ENCODE measurements at regions of chr1 and their contacts with region 1.

Region 1: DNA sequence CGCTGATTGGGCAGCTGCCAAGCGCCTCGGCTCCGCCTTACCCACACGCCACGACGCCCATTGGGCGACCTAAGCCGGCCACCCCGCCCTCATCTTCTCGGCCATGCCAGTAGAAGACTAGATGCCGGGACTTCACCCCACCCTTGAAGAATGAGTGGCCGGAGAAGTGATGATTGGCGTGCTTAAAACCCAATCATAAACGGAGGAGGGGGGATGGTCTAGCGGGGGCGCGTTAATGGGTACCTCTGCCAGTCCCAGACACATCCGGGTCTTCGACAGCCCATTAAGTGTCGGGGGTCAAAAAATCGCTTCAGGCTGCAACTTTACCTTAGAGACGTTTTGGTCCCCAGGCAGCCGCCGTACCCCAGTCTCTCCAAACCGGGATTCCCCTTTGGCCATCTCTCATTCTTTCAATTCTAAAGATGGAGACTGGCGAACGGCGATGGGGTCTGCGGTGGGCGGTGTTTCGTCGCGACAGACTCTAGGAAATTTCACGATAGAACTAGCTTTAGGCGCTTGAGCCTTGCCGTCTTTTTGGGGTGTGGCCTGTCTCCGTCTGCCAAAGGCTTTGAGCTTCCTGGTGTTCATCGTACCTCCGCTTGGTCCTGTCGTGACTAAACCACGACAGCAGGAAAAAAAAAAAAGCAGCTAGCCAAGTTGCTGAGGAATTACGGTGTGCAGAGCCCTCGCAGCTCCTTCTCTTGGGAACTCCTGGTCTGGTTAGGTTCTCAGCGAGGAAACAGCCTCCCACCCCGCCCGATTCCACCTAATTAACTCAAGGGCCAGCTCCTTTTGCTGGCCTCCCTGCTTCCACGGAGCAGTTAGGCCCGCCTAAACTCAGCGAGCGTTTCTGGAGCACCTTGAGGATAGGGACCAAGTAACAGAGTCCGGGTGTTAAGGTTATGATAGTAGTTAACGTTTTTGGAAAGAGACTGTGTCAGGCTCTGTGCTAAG is at the start of gene GATAD2B:
- DNase-seq: peak; percentile 100
- H3K4me3 Mint-ChIP-seq: peak within 1 kb of the TSS; percentile 74
- H3K27ac Mint-ChIP-seq: peak within 1 kb of the TSS; percentile 74
- H3K4me1 Mint-ChIP-seq: peaks cover 34% of the 10 kb centered on the region
- H3K27me3 Mint-ChIP-seq: no peaks in the 10 kb centered on the region
- CTCF ChIP-seq: no peak
- total RNA-seq, gene GATAD2B: 95.5 and 108 TPM in 2 replicates

Region 2: GRCh38 chr1:153478692-153479618 is 444.3 kb before region 1 on chr1:
- CTCF ChIA-PET with region 1: no interaction called
- POLR2A ChIA-PET with region 1: no interaction called
- intact Hi-C with region 1: no loop called
- DNase-seq: no peak
- H3K4me3 Mint-ChIP-seq: no peak overlapping the region
- H3K27ac Mint-ChIP-seq: no peak overlapping the region
- H3K4me1 Mint-ChIP-seq: peaks cover 11% of the 10 kb centered on the region
- H3K27me3 Mint-ChIP-seq: peaks cover 50% of the 10 kb centered on the region
- CTCF ChIP-seq: no peak

Region 3: GRCh38 chr1:153805042-153805745 is 118.1 kb before region 1 on chr1:
- CTCF ChIA-PET with region 1: interaction called, 9 read pairs
- POLR2A ChIA-PET with region 1: interaction called, 24 read pairs
- intact Hi-C with region 1: no loop called
- DNase-seq: peak; percentile 95
- H3K4me3 Mint-ChIP-seq: peak overlapping the region; percentile 60
- H3K27ac Mint-ChIP-seq: peak overlapping the region; percentile 99
- H3K4me1 Mint-ChIP-seq: peaks cover 32% of the 10 kb centered on the region
- H3K27me3 Mint-ChIP-seq: no peaks in the 10 kb centered on the region
- CTCF ChIP-seq: no peak

Region 4: DNA sequence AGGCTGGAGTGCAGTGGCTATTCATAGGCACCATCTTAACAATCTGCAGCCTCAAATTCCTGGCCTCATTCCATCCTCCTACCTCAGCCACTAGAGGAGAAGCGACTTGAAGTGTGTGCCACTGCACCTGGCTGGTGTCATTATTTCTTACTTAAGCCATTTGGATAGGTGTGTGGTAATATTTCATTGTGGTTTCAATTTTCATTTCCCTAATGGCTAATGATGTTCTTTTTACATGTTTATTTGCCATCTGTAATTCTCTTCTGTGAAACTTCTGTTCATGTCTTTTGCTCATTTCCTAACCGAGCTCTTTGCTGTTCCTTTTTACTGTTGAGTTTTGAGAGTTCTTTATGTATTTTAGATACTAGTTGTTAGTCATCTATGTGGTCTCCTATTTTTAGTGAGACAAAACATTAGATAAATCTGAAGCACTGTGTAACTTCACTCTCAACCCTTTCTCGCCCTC is 81.2 kb before region 1 on chr1:
- CTCF ChIA-PET with region 1: no interaction called
- POLR2A ChIA-PET with region 1: interaction called, 11 read pairs
- intact Hi-C with region 1: no loop called
- DNase-seq: peak; percentile 18
- H3K4me3 Mint-ChIP-seq: no peak overlapping the region
- H3K27ac Mint-ChIP-seq: peak overlapping the region; percentile 44
- H3K4me1 Mint-ChIP-seq: peaks cover 11% of the 10 kb centered on the region
- H3K27me3 Mint-ChIP-seq: no peaks in the 10 kb centered on the region
- CTCF ChIP-seq: no peak

Region 5: DNA sequence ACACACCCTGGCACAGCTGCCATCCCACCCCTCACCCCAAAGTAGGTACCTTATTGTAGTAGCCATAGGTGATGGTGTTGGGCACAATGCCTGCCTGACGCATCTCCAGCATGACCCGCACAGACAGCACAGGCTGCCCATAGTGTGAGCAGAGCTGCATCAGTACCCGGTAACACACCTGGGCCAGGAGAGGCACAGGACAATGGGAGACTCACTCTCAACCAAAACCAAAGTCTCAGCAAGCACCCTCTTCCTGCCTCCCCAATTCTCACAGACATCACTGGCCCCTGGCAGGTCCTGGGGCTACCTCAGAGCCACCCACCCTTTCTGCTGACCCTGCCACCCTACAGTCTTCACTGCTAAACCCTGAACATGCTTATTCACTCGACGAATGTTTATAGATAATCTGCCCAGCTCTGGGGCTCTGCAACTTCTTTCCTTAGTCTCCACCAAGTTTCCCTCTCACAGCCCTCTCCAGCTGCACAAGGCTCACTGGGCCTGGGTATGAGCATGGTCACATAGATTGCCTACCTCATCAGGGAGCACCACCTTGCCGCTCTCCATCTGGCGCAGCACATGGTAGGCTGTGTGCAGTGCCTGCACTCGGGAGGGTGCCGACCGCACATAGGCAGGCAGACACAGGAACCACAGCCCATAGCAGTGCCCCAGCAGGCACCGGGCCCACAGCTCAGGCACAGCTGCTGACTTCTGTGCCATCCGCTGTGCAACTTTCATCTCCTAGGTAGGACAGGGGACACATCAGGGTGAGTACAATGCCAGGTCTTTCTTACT is 13.0 kb after region 1 on chr1:
- CTCF ChIA-PET with region 1: interaction called, 3 read pairs
- POLR2A ChIA-PET with region 1: interaction called, 13 read pairs
- intact Hi-C with region 1: no loop called
- DNase-seq: no peak
- H3K4me3 Mint-ChIP-seq: no peak overlapping the region
- H3K27ac Mint-ChIP-seq: no peak overlapping the region
- H3K4me1 Mint-ChIP-seq: no peaks in the 10 kb centered on the region
- H3K27me3 Mint-ChIP-seq: no peaks in the 10 kb centered on the region
- CTCF ChIP-seq: no peak

Region 6: DNA sequence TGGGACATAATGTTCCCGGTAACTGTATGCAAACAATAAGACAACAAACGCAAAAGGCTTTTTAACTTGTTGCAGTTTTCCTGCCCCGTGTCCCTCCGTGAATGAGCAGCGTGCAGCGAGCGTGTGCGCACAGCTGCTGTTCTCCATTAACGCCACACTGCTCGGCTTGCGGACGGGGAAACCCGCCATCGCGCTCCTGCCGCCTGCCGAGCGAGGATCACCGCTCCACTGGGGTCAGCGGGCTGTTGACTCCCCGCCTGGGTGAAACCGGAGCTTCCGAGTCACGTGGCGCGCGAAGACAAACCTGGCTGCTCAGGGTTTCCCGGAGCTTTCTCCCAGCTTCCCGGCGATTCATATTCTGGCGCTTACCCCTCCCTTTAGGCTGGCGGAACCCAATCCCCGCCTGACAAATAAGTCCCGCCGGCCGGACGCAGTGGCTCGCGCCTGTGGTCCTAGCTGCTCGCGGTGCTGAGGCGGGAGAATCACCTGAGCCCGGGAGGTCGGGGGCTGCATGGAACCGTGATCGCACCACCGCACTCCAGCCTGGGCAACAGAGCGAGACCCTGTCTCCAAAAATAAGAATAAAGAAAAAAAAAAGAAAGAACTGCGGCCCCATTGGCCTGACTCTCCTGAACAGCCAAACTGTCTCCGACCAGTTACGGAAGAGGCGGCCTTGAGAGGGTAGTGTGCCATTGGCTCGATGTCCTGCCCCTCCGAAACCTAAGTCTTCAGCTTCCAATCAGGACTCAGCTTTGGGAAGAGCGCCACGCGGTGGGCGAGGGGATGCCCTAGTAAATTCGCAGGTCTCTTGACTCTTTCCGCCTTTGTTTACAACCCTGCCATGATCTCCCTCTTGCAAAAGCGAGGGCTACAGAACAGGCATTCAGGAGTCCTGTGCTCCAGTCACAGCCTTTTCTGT is 44.1 kb after region 1 on chr1 and contains the start of gene CREB3L4:
- CTCF ChIA-PET with region 1: interaction called, 16 read pairs
- POLR2A ChIA-PET with region 1: interaction called, 98 read pairs
- intact Hi-C with region 1: loop called (anchors 2 kb)
- DNase-seq: peak; percentile 100
- H3K4me3 Mint-ChIP-seq: peak within 1 kb of the TSS; percentile 95
- H3K27ac Mint-ChIP-seq: peak within 1 kb of the TSS; percentile 94
- H3K4me1 Mint-ChIP-seq: peaks cover 40% of the 10 kb centered on the region
- H3K27me3 Mint-ChIP-seq: no peaks in the 10 kb centered on the region
- CTCF ChIP-seq: peak; percentile 32
- total RNA-seq, gene CREB3L4: 14.7 and 17.6 TPM in 2 replicates

Region 7: DNA sequence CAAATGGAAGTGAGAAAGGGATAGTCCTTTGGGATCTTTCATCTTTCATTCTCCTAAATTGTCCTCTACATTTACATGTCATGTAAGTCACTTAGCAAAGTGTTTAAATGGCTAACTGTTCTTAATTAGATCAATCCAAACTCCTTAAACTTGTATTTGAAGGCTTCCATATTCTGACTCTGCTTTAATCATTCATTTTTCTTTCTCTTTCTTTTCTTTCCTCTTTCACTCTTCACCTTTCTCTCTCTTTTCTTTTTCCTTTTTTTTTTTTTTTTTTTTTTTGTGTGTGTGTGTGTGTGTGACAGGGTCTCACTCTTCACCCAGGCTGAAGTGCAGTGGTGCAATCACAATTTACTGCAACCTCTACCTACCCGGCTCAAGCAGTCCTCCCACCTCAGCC is 139.1 kb after region 1 on chr1:
- CTCF ChIA-PET with region 1: no interaction called
- POLR2A ChIA-PET with region 1: no interaction called
- intact Hi-C with region 1: no loop called
- DNase-seq: no peak
- H3K4me3 Mint-ChIP-seq: no peak overlapping the region
- H3K27ac Mint-ChIP-seq: no peak overlapping the region
- H3K4me1 Mint-ChIP-seq: no peaks in the 10 kb centered on the region
- H3K27me3 Mint-ChIP-seq: peaks cover 32% of the 10 kb centered on the region
- CTCF ChIP-seq: no peak